GM12878 (cell line): ENCODE measurements at regions of chr1 and their contacts with region 1.

Region 1: DNA sequence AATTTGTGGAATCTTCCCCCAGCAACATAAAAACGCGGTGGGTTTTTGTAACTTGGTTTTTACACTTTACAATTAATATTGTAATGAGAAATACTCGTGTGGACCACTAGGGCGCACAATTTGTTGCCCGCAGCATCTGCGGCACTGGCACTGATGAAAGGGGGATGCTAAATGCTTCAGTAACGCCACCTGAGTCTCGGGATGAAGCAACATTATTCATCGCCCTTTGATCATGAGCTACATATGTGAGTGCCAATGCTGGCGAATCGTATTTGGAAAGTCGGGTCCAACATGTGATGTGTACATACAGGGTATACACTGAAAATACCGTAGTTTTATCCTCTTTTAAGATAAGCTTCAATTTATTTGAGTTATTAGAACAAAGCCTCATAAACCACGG is 34.2 kb upstream of the COX20 start:
- DNase-seq: no peak
- ATAC-seq: peak; percentile 96
- H3K4me3 ChIP-seq: no peak overlapping the region
- H3K27ac ChIP-seq: no peak overlapping the region
- H3K4me1 ChIP-seq: no peaks in the 10 kb centered on the region
- H3K27me3 ChIP-seq: no peaks in the 10 kb centered on the region; a peak in 1 of 4 replicates
- CTCF ChIP-seq: peak; percentile 62 to 71 (median 65); a peak in 5 of 6 replicates
- EP300 ChIP-seq: no peak
- POLR2A ChIP-seq: no peak
- RAD21 ChIP-seq: peak; percentile 88

Region 2: DNA sequence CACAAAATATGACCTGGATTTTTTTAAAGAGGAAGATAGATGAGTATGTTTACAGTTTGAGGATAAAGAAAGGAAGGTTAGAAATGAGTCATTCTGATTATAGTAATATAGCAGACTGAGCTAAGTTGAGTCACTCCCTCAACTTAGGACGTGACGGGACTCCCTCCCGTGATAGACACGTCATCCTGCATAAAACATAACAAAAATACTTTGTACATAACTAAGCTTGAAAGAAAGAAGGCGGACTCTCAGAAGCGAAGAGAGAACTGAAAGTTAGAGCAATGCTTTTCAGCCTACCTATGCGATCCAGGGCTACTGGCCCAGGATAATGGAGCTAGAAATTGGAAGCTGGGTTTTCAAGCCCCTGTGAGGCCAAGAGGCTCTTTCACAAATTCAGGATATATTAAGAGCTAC is 201.3 kb before region 1 on chr1:
- CTCF ChIA-PET with region 1: interaction called, 169 read pairs
- POLR2A ChIA-PET with region 1: interaction called, 3 read pairs
- RAD21 ChIA-PET with region 1: interaction called, 47 read pairs
- SMC1A ChIA-PET with region 1: interaction called, 46 read pairs
- in situ Hi-C with region 1: loop called (anchors 5 kb)
- intact Hi-C with region 1: loop called (anchors 1 kb)
- DNase-seq: peak; percentile 40
- ATAC-seq: peak; percentile 94
- H3K4me3 ChIP-seq: no peak overlapping the region
- H3K27ac ChIP-seq: no peak overlapping the region
- H3K4me1 ChIP-seq: peaks cover 4% of the 10 kb centered on the region
- H3K27me3 ChIP-seq: peaks cover 2% of the 10 kb centered on the region in 2 experiments; a peak in 2 of 4 replicates
- CTCF ChIP-seq: no peak
- EP300 ChIP-seq: peak; percentile 60 to 61
- POLR2A ChIP-seq: no peak
- RAD21 ChIP-seq: no peak

Region 3: DNA sequence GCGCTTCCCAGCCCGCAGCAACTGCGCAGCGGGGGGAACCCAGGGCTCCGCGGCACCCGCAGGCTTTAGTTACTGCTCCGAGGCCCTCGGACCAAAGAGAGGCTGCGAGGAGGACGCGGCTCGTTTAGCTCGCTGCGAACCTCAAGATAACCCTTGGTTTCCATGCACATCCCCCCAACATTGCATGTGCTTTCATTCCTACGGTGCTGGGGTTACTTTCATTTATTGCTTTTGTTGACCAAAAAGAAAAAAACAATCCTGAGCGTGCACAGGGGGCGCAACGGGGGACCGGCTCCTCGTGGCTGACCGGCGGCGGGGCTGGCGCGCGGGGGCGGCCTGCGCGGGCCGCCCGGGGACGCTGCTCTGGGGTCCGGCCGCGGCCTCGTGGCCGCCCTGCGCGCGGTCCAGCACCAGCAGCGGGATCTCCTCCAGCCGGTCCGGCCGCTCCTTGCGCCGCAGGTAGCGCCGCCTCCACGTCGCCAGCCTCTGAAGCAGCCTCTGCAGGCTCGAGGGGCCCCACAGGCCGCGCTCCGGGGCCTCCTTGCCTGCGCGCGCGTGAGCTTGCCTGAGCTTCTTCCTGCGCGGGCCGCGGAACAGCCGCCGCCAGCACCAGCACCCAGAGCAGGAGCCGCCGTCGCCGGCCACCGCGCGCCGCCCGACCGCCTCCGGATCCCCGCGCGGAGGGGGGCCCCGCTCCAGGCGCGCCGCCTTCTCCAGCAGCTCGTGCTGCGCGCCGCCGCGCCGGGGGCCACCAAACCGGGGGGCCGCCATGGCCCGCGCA is 70.9 kb before region 1 on chr1:
- CTCF ChIA-PET with region 1: no interaction called
- POLR2A ChIA-PET with region 1: no interaction called
- RAD21 ChIA-PET with region 1: no interaction called
- SMC1A ChIA-PET with region 1: no interaction called
- in situ Hi-C with region 1: no loop called
- intact Hi-C with region 1: no loop called
- DNase-seq: no peak
- ATAC-seq: peak; percentile 53
- H3K4me3 ChIP-seq: peak overlapping the region; percentile 65; the same call in 1 of the 2 replicates
- H3K27ac ChIP-seq: no peak overlapping the region
- H3K4me1 ChIP-seq: no peaks in the 10 kb centered on the region
- H3K27me3 ChIP-seq: peaks cover 4 to 6% of the 10 kb centered on the region in 2 experiments
- CTCF ChIP-seq: no peak
- EP300 ChIP-seq: no peak
- POLR2A ChIP-seq: no peak
- RAD21 ChIP-seq: no peak

Region 4: GRCh38 chr1:244815600-244816099 is 14.4 kb after region 1 on chr1:
- CTCF ChIA-PET with region 1: interaction called, 36 read pairs
- POLR2A ChIA-PET with region 1: no interaction called
- RAD21 ChIA-PET with region 1: interaction called, 28 read pairs
- SMC1A ChIA-PET with region 1: interaction called, 55 read pairs
- in situ Hi-C with region 1: no loop called
- intact Hi-C with region 1: no loop called
- DNase-seq: peak; percentile 30
- ATAC-seq: peak; percentile 70
- H3K4me3 ChIP-seq: peak overlapping the region; percentile 46; the same call in 1 of the 2 replicates
- H3K27ac ChIP-seq: peak overlapping the region; percentile 24; the same call in 1 of the 2 replicates
- H3K4me1 ChIP-seq: peaks cover 5% of the 10 kb centered on the region
- H3K27me3 ChIP-seq: no peaks in the 10 kb centered on the region
- CTCF ChIP-seq: no peak
- EP300 ChIP-seq: peak in 1 of 2 experiments; percentile 9; a peak in 1 of 4 replicates
- POLR2A ChIP-seq: no peak
- RAD21 ChIP-seq: no peak

Region 5: GRCh38 chr1:244854865-244855578 is 53.8 kb after region 1 on chr1:
- CTCF ChIA-PET with region 1: interaction called, 10 read pairs
- POLR2A ChIA-PET with region 1: interaction called, 5 read pairs
- RAD21 ChIA-PET with region 1: interaction called, 5 read pairs
- SMC1A ChIA-PET with region 1: interaction called, 12 read pairs
- in situ Hi-C with region 1: no loop called
- intact Hi-C with region 1: no loop called
- DNase-seq: no peak
- ATAC-seq: peak; percentile 6
- H3K4me3 ChIP-seq: no peak overlapping the region
- H3K27ac ChIP-seq: no peak overlapping the region
- H3K4me1 ChIP-seq: no peaks in the 10 kb centered on the region
- H3K27me3 ChIP-seq: no peaks in the 10 kb centered on the region
- CTCF ChIP-seq: no peak
- EP300 ChIP-seq: no peak
- POLR2A ChIP-seq: no peak
- RAD21 ChIP-seq: no peak

Region 6: DNA sequence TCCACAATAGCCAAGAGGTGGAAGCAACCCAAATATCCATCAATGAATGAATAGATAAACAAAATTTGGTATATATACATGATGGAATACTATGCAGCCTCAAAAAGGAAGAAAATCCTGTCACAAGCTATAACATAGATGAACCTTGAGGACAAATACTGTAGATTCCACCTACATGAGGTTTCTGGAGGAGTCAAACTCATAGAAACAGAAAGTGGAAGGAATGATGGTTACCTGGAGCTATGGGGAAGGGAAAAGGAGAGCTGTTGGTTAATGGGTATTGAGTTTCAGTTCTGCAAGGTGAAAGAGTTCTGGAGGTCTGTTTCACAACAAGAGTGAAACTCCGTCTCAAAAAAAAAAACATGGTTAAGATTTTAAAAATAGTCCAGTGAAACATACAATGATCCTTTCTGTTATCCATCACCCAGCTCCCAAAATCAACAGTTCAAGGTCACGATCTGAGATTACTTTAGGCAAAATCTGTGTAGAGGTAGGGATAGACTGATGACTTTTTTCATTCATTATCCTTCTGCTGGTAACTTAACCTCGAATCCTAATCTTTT is 143.9 kb after region 1 on chr1:
- CTCF ChIA-PET with region 1: interaction called, 11 read pairs
- POLR2A ChIA-PET with region 1: no interaction called
- RAD21 ChIA-PET with region 1: interaction called, 5 read pairs
- SMC1A ChIA-PET with region 1: interaction called, 9 read pairs
- in situ Hi-C with region 1: no loop called
- intact Hi-C with region 1: no loop called
- DNase-seq: peak; percentile 85
- ATAC-seq: peak; percentile 74
- H3K4me3 ChIP-seq: peak overlapping the region; percentile 33
- H3K27ac ChIP-seq: peak overlapping the region; percentile 88
- H3K4me1 ChIP-seq: peaks cover 25% of the 10 kb centered on the region
- H3K27me3 ChIP-seq: no peaks in the 10 kb centered on the region
- CTCF ChIP-seq: no peak
- EP300 ChIP-seq: peak; percentile 54 to 73; a peak in 3 of 4 replicates
- POLR2A ChIP-seq: no peak
- RAD21 ChIP-seq: no peak

Region 7: DNA sequence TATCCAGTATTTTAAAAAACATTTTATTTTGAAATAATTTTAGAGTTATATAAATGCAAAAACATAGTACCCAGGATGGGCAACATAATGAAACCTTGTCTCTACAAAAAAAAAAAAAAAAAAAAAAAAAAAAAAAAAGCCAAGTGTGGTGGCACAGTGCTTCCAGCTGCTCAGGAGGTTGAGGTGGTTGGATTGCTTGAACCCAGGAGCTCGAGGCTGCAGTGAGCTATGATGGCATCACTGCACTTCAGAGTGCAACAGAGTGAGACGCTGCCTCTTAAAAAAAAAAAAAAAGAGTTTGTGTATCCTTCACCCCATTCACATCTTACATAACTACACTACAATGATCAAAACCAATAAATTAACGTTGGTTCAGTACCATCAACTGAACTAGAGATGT is 237.9 kb after region 1 on chr1:
- CTCF ChIA-PET with region 1: interaction called, 239 read pairs
- POLR2A ChIA-PET with region 1: interaction called, 3 read pairs
- RAD21 ChIA-PET with region 1: interaction called, 109 read pairs
- SMC1A ChIA-PET with region 1: interaction called, 91 read pairs
- in situ Hi-C with region 1: loop called (anchors 5 kb)
- intact Hi-C with region 1: loop called (anchors 1 kb)
- DNase-seq: no peak
- ATAC-seq: no peak
- H3K4me3 ChIP-seq: no peak overlapping the region
- H3K27ac ChIP-seq: no peak overlapping the region
- H3K4me1 ChIP-seq: no peaks in the 10 kb centered on the region
- H3K27me3 ChIP-seq: no peaks in the 10 kb centered on the region
- CTCF ChIP-seq: no peak
- EP300 ChIP-seq: no peak
- POLR2A ChIP-seq: no peak
- RAD21 ChIP-seq: no peak